IMR-90 (cell line): ENCODE measurements at regions of chr1 and their contacts with region 1.

Region 1: GRCh38 chr1:109426278-109427170 is at the start of gene PSMA5:
- DNase-seq: peak; percentile 100
- ATAC-seq: peak; percentile 98
- H3K4me3 ChIP-seq: peak within 1 kb of the TSS; percentile 70
- H3K27ac ChIP-seq: peak within 1 kb of the TSS; percentile 76
- H3K4me1 ChIP-seq: peaks cover 8% of the 10 kb centered on the region
- H3K27me3 ChIP-seq: no peaks in the 10 kb centered on the region
- CTCF ChIP-seq: no peak
- POLR2A ChIP-seq: peak; percentile 97
- RAD21 ChIP-seq: peak; percentile 18; the same call in 1 of the 2 replicates
- total RNA-seq, gene PSMA5: 75.5 and 83.9 TPM in 2 replicates

Region 2: GRCh38 chr1:109248797-109249642 is 177.5 kb before region 1 on chr1 and contains the start of gene CELSR2:
- CTCF ChIA-PET with region 1: no interaction called
- POLR2A ChIA-PET with region 1: interaction called, 10 read pairs
- dilution Hi-C with region 1: no loop called
- in situ Hi-C with region 1: no loop called
- intact Hi-C with region 1: no loop called
- DNase-seq: peak; percentile 54
- ATAC-seq: peak; percentile 88
- H3K4me3 ChIP-seq: peak within 1 kb of the TSS; percentile 54
- H3K27ac ChIP-seq: no peak within 1 kb of the TSS
- H3K4me1 ChIP-seq: peaks cover 13% of the 10 kb centered on the region
- H3K27me3 ChIP-seq: no peaks in the 10 kb centered on the region
- CTCF ChIP-seq: no peak
- POLR2A ChIP-seq: no peak
- RAD21 ChIP-seq: no peak
- total RNA-seq, gene CELSR2: 1.1 and 1.3 TPM in 2 replicates

Region 3: DNA sequence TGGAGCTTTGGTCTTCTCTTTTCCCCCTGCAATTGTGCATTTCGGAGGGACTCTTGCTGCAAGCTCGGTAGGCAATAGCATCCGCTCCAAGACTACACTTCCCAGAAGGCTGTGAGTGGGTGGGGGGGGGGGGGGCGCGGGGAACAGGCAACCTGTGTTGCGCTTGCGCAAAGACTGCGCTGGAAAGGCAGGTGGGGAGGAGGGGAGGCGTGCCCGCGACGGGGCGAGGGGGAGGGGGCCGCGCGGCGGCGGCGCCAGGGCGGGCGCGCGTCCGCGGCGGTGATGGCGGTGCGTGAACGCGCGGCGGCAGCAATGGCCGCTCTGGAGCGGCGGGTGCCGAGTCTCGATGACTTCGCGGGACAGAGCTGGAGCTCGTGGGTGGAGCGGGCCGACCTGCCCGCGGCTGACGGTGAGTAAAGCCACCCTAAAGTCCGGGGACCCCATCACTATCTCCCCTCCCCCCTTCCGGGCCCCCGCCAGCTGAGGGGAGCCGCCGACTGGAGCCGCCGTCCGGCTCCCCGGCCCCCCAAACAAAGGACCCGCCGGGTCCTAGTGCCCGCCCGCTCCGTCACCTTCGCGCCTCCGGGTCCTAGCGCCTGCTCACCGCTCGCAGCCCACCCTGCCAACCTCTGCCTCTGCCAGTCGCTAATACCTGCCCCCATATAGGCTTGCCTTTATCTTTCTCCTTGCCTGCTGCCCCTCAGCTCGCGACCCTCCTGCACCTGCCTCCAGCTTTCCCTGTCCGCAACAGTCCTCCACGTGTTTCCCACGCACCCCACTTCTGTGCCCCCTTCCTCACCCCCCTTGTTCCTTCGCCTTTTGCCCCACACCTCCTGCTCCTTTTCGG is 57.4 kb after region 1 on chr1 and contains the start of gene ATXN7L2:
- CTCF ChIA-PET with region 1: no interaction called
- POLR2A ChIA-PET with region 1: no interaction called
- dilution Hi-C with region 1: no loop called
- in situ Hi-C with region 1: no loop called
- intact Hi-C with region 1: loop called (anchors 1 kb)
- DNase-seq: peak; percentile 89
- ATAC-seq: peak; percentile 94
- H3K4me3 ChIP-seq: peak within 1 kb of the TSS; percentile 59
- H3K27ac ChIP-seq: peak within 1 kb of the TSS; percentile 99
- H3K4me1 ChIP-seq: peaks cover 9% of the 10 kb centered on the region
- H3K27me3 ChIP-seq: peaks cover 20% of the 10 kb centered on the region
- CTCF ChIP-seq: no peak
- POLR2A ChIP-seq: peak; percentile 93
- RAD21 ChIP-seq: no peak
- total RNA-seq, gene ATXN7L2: 1.3 and 1.7 TPM in 2 replicates